Caco-2 (cell line): ENCODE measurements at regions of chr5 and their contacts with region 1.

Region 1: DNA sequence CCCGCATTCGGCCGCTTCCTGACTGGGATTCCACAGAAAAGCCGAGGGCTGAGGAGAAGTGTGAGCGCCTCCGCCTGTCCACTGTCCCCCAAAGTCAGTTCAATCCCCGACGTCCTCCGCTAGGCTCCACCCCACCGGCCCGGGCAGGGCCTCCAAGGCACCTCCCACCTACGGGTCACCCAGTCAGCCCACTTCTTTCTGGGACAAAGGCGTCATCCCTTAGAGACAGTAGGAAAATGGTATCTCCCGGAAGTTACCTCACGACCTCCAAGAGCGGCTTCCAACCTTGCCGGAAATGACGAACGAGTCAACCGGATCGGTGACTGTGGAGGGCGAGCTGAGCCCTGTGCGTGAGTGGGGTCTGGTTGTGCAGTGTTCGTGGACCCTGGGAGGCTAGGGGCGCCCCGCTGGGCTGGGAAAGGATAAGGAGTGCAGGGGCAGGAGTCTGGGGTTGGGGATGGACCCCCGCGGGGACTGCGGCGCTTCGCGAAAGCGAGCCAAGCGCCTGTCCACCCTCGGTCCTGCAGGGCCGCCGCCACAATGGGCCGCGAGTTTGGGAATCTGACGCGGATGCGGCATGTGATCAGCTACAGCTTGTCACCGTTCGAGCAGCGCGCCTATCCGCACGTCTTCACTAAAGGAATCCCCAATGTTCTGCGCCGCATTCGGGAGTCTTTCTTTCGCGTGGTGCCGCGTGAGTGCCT is at the starts of genes GDF9 and UQCRQ:
- DNase-seq: peak; percentile 99
- H3K4me3 ChIP-seq: peak within 1 kb of the TSS; percentile 73
- H3K4me3 Mint-ChIP-seq: peak within 1 kb of the TSS; percentile 91
- H3K27ac Mint-ChIP-seq: peak within 1 kb of the TSS; percentile 98
- H3K4me1 ChIP-seq: peaks cover 16% of the 10 kb centered on the region
- H3K4me1 Mint-ChIP-seq: no peaks in the 10 kb centered on the region
- H3K27me3 ChIP-seq: no peaks in the 10 kb centered on the region
- H3K27me3 Mint-ChIP-seq: no peaks in the 10 kb centered on the region
- CTCF ChIP-seq: peak in 1 of 2 experiments; percentile 54
- total RNA-seq, gene GDF9: 0.59 and 0.81 TPM in 2 replicates
- total RNA-seq, gene UQCRQ: 356 and 449 TPM in 2 replicates

Region 2: DNA sequence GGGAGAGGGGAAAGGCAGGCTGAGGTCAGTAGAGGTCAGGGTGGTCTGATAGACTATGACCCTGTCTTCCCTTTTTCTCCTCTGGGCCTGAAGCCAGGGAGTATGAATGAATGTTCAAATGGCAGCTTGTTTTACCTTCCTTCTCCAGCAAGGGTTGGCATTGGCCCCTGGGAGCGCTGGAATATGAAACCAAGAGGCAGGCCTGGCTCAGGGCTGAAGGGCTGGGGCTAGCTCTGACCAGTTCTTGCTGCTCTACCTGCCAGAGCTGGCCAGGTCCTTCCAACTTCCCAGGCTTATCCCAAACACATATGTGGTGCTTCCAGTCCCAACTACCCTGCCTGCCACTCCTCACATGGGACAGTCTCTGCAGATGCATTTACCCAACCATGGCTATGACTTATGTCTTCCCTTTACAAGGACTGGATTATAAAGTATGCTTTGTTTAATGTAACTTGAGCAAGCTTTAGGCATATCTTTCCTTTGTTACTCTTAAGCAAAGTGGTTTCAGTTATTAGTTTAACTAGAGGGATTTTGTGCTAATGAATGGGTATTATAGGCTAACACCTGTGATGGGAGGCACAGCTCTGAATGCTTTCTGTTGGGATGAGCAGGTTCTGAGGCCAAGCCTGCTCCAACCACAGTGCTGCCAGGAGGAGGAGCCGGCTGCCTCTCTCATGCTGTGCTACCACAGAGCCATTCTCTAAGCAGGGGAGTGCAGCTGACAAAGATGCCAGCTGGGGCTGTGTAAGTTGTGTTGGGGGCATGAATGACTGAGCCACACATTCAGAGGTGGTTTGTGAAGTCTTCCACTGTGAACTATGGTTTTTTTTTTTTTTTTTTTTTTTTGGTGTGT is 113.1 kb before region 1 on chr5:
- CTCF ChIA-PET with region 1: interaction called, 15 read pairs
- POLR2A ChIA-PET with region 1: no interaction called
- intact Hi-C with region 1: loop called (anchors 1 kb)
- DNase-seq: peak in 1 of 2 experiments; percentile 42
- H3K4me3 ChIP-seq: no peak overlapping the region
- H3K4me3 Mint-ChIP-seq: no peak overlapping the region
- H3K27ac Mint-ChIP-seq: no peak overlapping the region
- H3K4me1 ChIP-seq: no peaks in the 10 kb centered on the region
- H3K4me1 Mint-ChIP-seq: peaks cover 6% of the 10 kb centered on the region
- H3K27me3 ChIP-seq: no peaks in the 10 kb centered on the region
- H3K27me3 Mint-ChIP-seq: no peaks in the 10 kb centered on the region
- CTCF ChIP-seq: peak in 1 of 2 experiments; percentile 36

Region 3: GRCh38 chr5:132807163-132807838 is 59.2 kb before region 1 on chr5:
- CTCF ChIA-PET with region 1: interaction called, 9 read pairs
- POLR2A ChIA-PET with region 1: interaction called, 5 read pairs
- intact Hi-C with region 1: loop called (anchors 1 kb)
- DNase-seq: peak; percentile 87 to 94
- H3K4me3 ChIP-seq: peak overlapping the region; percentile 8
- H3K4me3 Mint-ChIP-seq: peak overlapping the region; percentile 45
- H3K27ac Mint-ChIP-seq: peak overlapping the region; percentile 20
- H3K4me1 ChIP-seq: peaks cover 13% of the 10 kb centered on the region
- H3K4me1 Mint-ChIP-seq: peaks cover 16% of the 10 kb centered on the region
- H3K27me3 ChIP-seq: no peaks in the 10 kb centered on the region
- H3K27me3 Mint-ChIP-seq: no peaks in the 10 kb centered on the region
- CTCF ChIP-seq: peak; percentile 44 to 75

Region 4: DNA sequence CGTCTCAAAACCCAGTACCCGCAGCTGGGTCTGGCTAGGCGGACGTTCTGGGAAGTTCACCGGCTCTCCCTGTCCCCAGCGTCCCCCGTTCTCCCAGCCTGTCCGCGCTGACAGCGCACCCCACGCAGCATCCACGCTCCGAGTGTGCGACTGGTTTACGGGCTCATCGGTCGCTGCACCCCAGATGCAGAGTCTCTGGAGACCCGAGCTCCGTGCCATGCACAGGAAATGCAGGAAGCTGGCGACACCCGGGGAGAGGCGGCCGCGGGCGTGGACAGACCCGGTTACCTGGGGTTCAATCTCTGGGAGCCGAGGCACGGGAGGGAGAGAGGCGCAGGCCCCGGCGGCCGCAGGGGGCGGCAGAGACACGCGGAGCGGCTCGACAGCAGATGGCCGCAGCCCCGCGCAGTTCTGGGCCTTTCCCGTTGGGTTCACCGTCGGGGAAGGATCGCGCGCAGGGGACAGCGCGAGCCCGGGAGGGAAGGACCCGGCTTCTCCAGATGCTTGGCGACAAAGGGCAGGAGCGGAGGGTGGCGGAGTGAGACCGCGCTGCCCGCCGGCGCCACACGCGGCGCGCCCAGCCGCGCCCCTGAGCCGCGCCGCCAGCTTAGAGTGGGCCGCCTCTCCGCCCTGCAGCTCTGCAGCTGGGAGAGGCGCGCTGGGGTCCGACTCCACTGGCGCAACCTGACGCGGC is 36.6 kb before region 1 on chr5:
- CTCF ChIA-PET with region 1: interaction called, 17 read pairs
- POLR2A ChIA-PET with region 1: interaction called, 4 read pairs
- intact Hi-C with region 1: loop called (anchors 1 kb)
- DNase-seq: peak; percentile 78 to 88
- H3K4me3 ChIP-seq: peak overlapping the region; percentile 76
- H3K4me3 Mint-ChIP-seq: peak overlapping the region; percentile 88
- H3K27ac Mint-ChIP-seq: peak overlapping the region; percentile 73
- H3K4me1 ChIP-seq: peaks cover 10% of the 10 kb centered on the region
- H3K4me1 Mint-ChIP-seq: no peaks in the 10 kb centered on the region
- H3K27me3 ChIP-seq: no peaks in the 10 kb centered on the region
- H3K27me3 Mint-ChIP-seq: no peaks in the 10 kb centered on the region
- CTCF ChIP-seq: peak; percentile 89 to 96

Region 5: GRCh38 chr5:132839426-132840301 is 26.8 kb before region 1 on chr5:
- CTCF ChIA-PET with region 1: interaction called, 6 read pairs
- POLR2A ChIA-PET with region 1: interaction called, 4 read pairs
- intact Hi-C with region 1: loop called (anchors 2 kb)
- DNase-seq: peak in 1 of 2 experiments; percentile 52
- H3K4me3 ChIP-seq: no peak overlapping the region
- H3K4me3 Mint-ChIP-seq: no peak overlapping the region
- H3K27ac Mint-ChIP-seq: peak overlapping the region; percentile 55
- H3K4me1 ChIP-seq: peaks cover 37% of the 10 kb centered on the region
- H3K4me1 Mint-ChIP-seq: peaks cover 35% of the 10 kb centered on the region
- H3K27me3 ChIP-seq: no peaks in the 10 kb centered on the region
- H3K27me3 Mint-ChIP-seq: no peaks in the 10 kb centered on the region
- CTCF ChIP-seq: no peak

Region 6: GRCh38 chr5:132883261-132883834 is 16.9 kb after region 1 on chr5:
- CTCF ChIA-PET with region 1: interaction called, 11 read pairs
- POLR2A ChIA-PET with region 1: interaction called, 7 read pairs
- intact Hi-C with region 1: loop called (anchors 2 kb)
- DNase-seq: peak; percentile 70 to 74
- H3K4me3 ChIP-seq: no peak overlapping the region
- H3K4me3 Mint-ChIP-seq: no peak overlapping the region
- H3K27ac Mint-ChIP-seq: no peak overlapping the region
- H3K4me1 ChIP-seq: no peaks in the 10 kb centered on the region
- H3K4me1 Mint-ChIP-seq: peaks cover 14% of the 10 kb centered on the region
- H3K27me3 ChIP-seq: no peaks in the 10 kb centered on the region
- H3K27me3 Mint-ChIP-seq: no peaks in the 10 kb centered on the region
- CTCF ChIP-seq: peak; percentile 31 to 81

Region 7: DNA sequence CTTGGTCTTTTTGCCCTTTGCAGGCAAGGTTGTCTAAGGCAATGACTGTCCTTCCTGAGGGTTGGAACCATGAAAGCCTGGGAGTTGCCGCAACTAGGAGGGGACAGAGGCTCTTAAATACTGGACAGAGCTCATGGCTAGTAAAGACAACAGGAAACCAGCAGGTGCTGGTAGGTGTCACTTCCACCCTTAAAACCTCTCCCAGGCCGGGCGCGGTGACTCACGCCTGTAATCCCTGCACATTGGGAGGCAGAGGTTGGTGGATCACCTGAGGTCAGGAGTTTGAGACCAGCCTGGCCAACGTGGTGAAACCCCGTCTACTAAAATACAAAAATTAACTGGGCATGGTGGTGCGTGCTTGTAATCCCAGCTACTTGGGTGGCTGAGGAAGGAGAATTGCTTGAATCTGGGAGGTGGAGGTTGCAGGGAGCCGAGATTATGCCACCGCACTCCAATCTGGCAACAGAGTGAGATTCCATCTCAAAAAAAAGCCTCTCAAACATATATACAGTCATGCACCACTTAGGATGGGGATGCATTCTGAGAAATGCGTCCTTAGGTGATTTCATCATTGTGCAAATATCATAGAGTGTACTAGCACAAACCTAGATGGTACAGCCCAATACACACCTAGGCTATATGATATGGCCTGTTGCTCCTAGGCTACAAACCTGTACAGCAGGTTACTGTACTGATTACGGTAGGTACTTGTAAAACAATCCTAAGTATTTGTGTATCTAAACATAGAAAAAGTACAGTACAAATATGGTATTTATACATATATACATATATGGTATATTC is 288.0 kb after region 1 on chr5:
- CTCF ChIA-PET with region 1: no interaction called
- POLR2A ChIA-PET with region 1: no interaction called
- intact Hi-C with region 1: no loop called
- DNase-seq: no peak
- H3K4me3 ChIP-seq: no peak overlapping the region
- H3K4me3 Mint-ChIP-seq: no peak overlapping the region
- H3K27ac Mint-ChIP-seq: no peak overlapping the region
- H3K4me1 ChIP-seq: no peaks in the 10 kb centered on the region
- H3K4me1 Mint-ChIP-seq: no peaks in the 10 kb centered on the region
- H3K27me3 ChIP-seq: no peaks in the 10 kb centered on the region
- H3K27me3 Mint-ChIP-seq: no peaks in the 10 kb centered on the region
- CTCF ChIP-seq: no peak